K562 (cell line): ENCODE measurements at regions of chr21 and their contacts with region 1.

Region 1: GRCh38 chr21:43866260-43866629 is 1.2 kb downstream of the AGPAT3 start:
- DNase-seq: peak; percentile 43 to 69 (median 51)
- ATAC-seq: peak; percentile 58
- H3K4me3 ChIP-seq: peak overlapping the region; percentile 75
- H3K27ac ChIP-seq: peak overlapping the region; percentile 90
- H3K4me1 ChIP-seq: peaks cover 24 to 51% of the 10 kb centered on the region in 2 experiments
- H3K27me3 ChIP-seq: no peaks in the 10 kb centered on the region
- CTCF ChIP-seq: no peak
- EP300 ChIP-seq: no peak
- POLR2A ChIP-seq: 0 out of 2 replicates have a peak, but pooled peaks have one; percentile 27
- RAD21 ChIP-seq: no peak

Region 2: DNA sequence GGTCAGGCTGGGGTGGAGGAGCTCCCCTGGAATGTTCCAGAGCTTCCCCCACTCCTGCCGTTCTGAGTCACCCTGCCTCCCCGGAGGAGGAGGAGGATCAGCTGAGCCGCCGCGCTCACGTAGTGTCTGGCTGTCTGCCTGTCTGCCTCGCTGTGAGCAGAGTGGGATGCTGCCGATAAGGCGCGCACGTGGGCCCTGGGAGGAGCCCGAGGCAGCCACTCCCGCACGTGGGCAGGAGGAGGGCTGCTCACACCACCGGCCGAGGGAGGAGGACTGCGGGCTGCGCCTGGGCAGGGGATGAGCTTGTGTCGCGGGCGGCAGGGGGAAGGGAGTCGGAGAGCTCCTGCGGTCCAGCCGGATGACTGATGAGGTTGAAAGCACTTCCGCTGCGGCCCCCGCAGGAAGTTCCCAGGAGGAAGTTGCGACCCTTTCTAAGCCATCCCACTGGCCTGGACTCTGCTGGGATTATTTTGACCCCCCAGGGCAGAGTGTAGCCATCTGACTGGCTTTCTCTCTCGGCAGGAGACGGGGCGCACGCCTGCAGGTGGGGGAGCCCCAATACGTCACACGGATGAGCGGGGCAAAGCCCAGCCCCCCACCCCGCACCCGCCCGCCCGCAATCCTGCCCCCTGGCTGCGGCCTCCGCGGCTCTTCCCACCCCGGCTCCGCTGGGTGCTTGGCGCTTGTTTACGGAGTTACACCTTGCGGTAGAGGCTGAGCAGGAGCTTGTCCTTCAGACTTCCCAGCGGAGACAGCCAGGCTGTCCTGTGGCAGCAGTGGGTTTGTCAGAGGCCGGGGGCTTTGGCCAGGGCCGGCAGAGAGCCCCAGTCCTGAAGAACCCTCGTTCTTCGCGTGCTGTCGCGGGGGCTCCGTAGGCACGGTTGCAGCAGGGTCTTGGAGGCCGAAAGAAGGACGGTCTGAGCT is 137.5 kb before region 1 on chr21:
- CTCF ChIA-PET with region 1: no interaction called
- POLR2A ChIA-PET with region 1: no interaction called
- in situ Hi-C with region 1: no loop called
- intact Hi-C with region 1: no loop called
- DNase-seq: peak; percentile 95 to 99 (median 96)
- ATAC-seq: peak; percentile 97
- H3K4me3 ChIP-seq: peak overlapping the region; percentile 62
- H3K27ac ChIP-seq: peak overlapping the region; percentile 79
- H3K4me1 ChIP-seq: peaks cover 25 to 59% of the 10 kb centered on the region in 2 experiments
- H3K27me3 ChIP-seq: no peaks in the 10 kb centered on the region
- CTCF ChIP-seq: peak in 2 of 3 experiments; percentile 24 to 54; a peak in 3 of 6 replicates
- EP300 ChIP-seq: peak; percentile 81
- POLR2A ChIP-seq: peak; percentile 72
- RAD21 ChIP-seq: peak in 1 of 2 experiments; percentile 51; a peak in 2 of 4 replicates

Region 3: DNA sequence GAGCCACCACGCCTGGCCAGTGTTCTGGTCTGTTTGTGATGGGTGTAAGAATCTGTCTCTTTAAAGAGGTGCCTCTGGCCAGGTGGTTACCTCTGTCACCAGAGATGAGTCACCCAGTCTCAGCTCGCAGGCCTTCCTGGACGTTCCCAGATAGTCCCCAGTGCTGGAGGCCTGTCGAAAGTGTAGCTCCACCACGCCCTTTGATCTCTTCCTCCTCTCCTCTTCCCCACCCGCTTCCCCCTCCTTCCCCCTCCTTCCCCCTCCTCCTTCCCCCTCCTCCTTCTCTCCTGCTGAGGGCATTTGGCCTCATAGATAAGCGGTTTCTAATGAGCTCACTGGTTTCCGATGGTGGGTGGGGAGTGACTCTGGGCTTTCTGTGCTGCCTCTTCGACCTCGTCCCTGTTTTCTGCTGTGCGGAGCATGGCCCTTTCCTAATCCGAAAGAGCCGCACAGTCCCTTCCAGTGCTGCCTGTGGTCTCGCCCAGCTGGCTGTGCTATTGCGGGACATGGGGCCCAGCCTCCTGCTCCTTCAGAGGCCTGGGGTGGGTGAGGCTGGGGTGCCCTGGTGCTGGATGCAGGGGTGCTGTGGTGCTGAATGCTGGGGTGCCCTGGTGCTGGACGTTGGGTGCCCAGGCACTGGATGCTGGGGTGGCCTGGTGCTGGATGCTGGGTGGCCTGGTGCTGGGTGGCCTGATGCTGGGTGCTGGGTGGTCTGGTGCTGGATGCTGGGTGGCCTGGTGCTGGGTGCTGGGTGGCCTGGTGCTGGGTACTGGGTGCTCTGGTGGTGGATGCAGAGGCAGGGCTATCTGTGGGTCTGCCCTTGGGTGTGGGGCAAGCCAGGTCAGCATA is 18.0 kb after region 1 on chr21:
- CTCF ChIA-PET with region 1: interaction called, 3 read pairs
- POLR2A ChIA-PET with region 1: interaction called, 20 read pairs
- in situ Hi-C with region 1: no loop called
- intact Hi-C with region 1: loop called (anchors 1 kb)
- DNase-seq: peak; percentile 95 to 98 (median 96)
- ATAC-seq: peak; percentile 93
- H3K4me3 ChIP-seq: peak overlapping the region; percentile 35
- H3K27ac ChIP-seq: peak overlapping the region; percentile 98
- H3K4me1 ChIP-seq: peaks cover 40 to 60% of the 10 kb centered on the region in 2 experiments
- H3K27me3 ChIP-seq: no peaks in the 10 kb centered on the region
- CTCF ChIP-seq: no peak
- EP300 ChIP-seq: peak; percentile 91; the same call in 1 of the 2 replicates
- POLR2A ChIP-seq: peak; percentile 79
- RAD21 ChIP-seq: peak in 1 of 2 experiments; percentile 26; a peak in 1 of 4 replicates

Region 4: DNA sequence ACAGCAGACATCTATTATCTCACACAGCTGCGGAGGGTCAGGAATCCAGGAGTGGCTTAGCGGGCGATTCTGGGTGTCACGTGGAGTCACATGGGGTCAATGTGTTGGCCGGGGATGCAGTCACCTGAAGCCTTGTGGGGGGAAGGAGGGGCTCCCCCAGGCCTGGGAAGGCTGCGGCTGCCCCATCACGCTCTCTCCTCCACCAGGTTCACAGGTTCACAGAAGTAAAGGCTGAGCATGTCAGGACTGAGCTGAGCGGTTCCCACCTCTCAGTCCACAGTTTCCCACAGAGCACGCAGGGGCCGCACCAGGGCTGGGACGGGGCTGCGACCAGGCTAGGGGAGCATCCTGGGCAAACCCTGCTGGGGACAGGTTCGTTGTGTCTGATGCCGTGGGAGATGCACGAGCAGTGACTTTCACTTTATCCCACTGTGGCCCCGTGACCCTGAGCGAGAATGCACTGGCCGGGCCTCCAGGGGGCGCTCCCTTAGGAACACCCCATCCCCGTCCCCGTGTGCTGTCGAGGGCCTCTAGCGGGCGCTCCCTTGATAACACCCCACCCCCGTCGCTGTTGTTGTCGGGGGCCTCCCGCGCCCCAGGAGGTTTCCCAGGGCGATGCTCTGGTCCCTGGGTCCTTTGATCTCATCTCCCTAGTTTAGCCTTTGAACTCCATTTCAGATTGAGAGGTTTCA is 72.7 kb after region 1 on chr21:
- CTCF ChIA-PET with region 1: interaction called, 5 read pairs
- POLR2A ChIA-PET with region 1: interaction called, 3 read pairs
- in situ Hi-C with region 1: no loop called
- intact Hi-C with region 1: loop called (anchors 2 kb)
- DNase-seq: peak; percentile 95 to 99 (median 98)
- ATAC-seq: peak; percentile 96
- H3K4me3 ChIP-seq: peak overlapping the region; percentile 23
- H3K27ac ChIP-seq: peak overlapping the region; percentile 68
- H3K4me1 ChIP-seq: peaks cover 20 to 78% of the 10 kb centered on the region in 2 experiments; a peak in 4 of 5 replicates
- H3K27me3 ChIP-seq: no peaks in the 10 kb centered on the region
- CTCF ChIP-seq: peak; percentile 100
- EP300 ChIP-seq: peak; percentile 73
- POLR2A ChIP-seq: no peak
- RAD21 ChIP-seq: peak; percentile 97 to 98